HEK293T (cell line): ENCODE measurements at regions of chr11 and their contacts with region 1.

Region 1: GRCh38 chr11:85558411-85558810 is 68.7 kb downstream of the DLG2 start:
- DNase-seq: no peak

Region 2: GRCh38 chr11:85517272-85517671 is 41.1 kb before region 1 on chr11:
- CTCF ChIA-PET with region 1: no interaction called
- POLR2A ChIA-PET with region 1: no interaction called
- DNase-seq: no peak

Region 3: DNA sequence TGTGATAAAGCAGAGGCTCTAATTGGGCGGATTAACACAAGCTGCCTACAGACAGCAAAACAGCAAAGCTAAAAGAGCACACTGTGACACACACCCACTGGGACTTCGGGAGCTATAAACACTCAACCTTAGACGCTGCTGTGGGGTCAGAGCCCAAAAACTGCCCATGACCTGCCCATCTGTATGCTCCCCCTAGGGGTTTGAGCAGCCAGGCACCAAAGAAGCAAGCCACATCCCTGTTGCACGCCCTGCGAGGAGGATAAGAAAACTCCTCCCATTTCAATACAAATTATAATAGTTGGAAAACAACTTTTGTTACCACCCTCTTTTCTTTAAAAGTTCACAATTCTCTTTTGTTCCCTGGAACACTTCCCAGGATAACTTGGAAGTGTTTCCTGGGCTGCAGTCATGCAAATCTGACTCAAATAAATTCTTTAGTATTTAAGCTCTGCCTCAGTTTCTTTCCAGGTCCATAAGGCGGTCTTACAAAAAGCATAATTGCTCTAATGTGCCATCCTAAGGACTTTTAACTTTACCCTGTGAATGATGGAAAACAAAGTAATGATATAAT is 17.7 kb before region 1 on chr11:
- CTCF ChIA-PET with region 1: no interaction called
- POLR2A ChIA-PET with region 1: no interaction called
- DNase-seq: no peak

Region 4: DNA sequence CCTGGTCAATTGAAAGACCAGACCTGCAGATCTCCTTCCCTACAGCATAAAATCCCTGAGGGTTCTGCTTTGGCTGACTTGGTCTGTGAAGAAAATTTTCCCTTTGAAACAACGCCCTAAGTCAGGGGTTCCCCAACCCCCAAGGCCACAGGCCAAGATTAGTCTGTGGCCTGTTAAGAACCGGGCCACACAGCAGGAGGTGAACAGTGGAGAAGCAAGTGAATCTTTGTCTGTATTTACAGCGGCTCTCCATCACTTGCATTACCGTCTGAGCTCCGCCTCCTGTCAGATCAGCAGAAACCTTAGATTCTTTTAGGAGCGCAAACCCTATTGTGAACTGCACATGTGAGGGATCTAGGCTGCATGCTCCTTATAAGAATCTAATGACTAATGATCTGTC is 335.0 kb after region 1 on chr11:
- CTCF ChIA-PET with region 1: interaction called, 10 read pairs
- POLR2A ChIA-PET with region 1: no interaction called
- DNase-seq: no peak